ENCODE measurements at regions of chr5 and their contacts with region 1.

Region 1: DNA sequence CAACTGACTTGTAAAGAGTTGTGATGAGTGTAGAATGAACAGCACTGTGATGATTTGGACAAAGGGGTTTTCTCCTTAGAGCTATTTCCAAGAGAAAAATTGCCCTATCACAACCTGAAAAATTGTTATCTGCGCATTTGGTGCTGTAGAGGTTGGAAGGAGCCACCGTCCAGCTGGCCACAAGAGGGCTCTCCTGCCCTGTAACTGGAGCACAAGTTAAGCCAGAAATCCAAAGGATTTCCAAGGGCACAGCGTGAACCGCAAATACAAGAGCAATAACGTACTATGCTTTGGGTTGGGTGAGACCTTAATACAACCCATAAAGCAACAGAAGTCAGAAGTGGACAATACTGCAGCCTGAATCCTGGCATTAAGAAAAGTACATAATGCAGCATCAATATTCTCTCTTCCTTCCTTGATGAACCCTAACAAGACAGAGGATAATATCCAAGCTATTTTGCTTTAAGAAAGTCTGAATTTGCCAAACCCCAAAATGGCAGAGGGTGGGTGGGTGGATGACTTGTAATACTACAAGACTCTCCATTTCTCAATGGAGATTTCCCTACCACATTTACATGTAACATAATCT is 56.8 kb upstream of the SMIM32 start:
- DNase-seq: peak; percentile 30 to 72 (median 46)
- ATAC-seq: peak; percentile 68 to 93 (median 88)
- H3K4me3 ChIP-seq: no peak overlapping the region
- H3K27ac ChIP-seq: no peak overlapping the region
- H3K4me1 ChIP-seq: no peaks in the 10 kb centered on the region
- H3K27me3 ChIP-seq: no peaks in the 10 kb centered on the region
- CTCF ChIP-seq: peak; percentile 26 to 73 (median 55)

Region 2: DNA sequence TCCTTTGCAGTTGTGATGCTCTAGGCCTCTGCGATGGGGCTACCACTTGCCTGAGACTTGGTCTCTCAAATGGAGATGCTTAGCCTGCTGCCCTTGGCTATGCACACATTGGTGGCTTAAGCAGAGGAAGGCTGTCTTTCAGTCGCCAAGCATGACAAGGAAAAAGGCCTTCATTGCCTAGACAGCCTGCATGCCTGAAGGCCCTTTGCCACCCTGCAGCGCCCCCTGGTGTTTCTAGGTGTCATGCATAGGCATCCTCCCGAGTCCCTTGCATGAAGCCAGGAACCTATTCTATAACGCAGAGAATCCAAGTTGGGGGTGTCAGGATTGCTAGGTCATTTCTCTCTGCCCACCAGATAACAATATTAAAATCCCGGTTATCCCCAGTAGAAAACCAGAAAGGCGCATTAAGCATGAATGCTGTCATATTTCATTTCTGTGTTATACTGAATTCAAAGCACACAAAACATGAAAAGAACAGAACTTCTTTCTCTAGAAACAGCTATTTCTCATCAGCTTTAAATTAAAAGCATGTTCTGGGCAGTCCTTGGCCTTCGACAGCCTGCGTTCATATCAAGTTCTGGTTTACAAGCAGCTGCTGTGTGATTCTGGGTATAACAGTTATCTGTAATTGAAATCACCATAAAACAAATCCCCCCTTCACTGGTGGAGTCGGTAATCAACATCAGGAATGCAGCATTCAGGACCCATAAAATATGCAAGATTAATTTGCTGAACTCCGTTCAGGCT is 175.2 kb after region 1 on chr5:
- intact Hi-C with region 1: loop called in 2 of 3 experiments (anchors 10 kb)
- DNase-seq: peak; percentile 54 to 92 (median 78)
- ATAC-seq: peak in 3 of 4 donors; percentile 71 to 88 (median 82)
- H3K4me3 ChIP-seq: no peak overlapping the region
- H3K27ac ChIP-seq: no peak overlapping the region
- H3K4me1 ChIP-seq: no peaks in the 10 kb centered on the region
- H3K27me3 ChIP-seq: no peaks in the 10 kb centered on the region
- CTCF ChIP-seq: peak; percentile 59 to 73 (median 69)

Region 3: DNA sequence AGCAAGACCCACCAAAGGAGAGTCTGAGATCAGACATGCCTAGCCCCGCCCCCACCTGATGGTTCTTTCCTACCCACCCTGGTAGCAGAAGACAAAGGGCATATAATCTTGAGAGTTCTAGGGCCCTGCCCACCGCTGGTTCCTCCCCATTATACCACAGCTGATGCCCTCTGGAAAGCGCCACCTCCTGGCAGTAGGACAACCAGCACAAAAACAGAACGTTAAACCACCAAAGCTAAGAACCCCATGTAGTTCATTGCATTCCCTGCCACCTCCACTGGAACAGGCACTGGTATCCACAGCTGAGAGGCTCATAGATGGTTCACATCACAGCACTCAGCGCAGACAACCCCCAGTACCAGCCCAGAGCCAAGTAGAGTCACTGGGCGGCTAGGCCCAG is 196.8 kb after region 1 on chr5:
- intact Hi-C with region 1: no loop called
- DNase-seq: no peak
- ATAC-seq: no peak
- H3K4me3 ChIP-seq: no peak overlapping the region
- H3K27ac ChIP-seq: no peak overlapping the region
- H3K4me1 ChIP-seq: no peaks in the 10 kb centered on the region
- H3K27me3 ChIP-seq: no peaks in the 10 kb centered on the region
- CTCF ChIP-seq: no peak

Region 4: DNA sequence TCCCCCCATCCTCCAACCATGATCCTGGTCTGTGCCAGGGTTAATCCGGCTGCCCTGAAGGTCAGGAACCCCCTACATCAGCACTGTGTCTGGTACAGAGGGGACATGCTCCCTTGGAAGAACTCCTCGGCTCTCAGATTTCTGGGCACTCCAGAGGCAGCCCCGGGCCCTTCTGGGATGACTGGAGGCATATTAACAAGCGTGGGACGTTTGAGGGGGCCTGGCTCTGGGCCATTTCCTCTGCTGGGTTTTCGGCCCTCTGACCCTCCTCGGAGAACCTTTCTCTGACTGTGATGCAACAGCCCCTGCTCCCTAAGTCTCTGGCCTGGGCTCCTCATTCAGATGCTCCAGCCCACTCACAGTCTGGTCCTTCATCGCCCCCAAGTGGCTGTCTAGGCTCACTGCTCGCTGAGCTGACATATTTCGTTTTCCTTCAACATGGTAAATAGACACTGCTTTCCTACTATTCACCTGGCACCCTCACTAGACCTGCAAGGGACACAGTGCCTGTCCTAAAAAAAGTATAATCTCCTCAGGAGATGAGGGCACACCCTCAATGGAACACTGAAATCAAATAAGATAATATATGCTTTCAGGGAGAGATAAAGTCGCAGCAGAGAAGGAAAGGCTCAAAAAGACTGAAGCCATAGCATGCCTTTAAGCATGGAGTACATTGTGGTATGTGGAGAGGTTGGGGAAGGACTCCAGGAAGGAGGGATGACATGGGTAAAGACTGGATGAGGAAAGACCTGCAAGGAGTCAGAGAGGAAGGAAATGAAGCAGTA is 520.3 kb after region 1 on chr5:
- intact Hi-C with region 1: loop called in 2 of 3 experiments (anchors 5 to 10 kb)
- DNase-seq: peak; percentile 42 to 77 (median 67)
- ATAC-seq: peak; percentile 60 to 96 (median 88)
- H3K4me3 ChIP-seq: no peak overlapping the region
- H3K27ac ChIP-seq: no peak overlapping the region
- H3K4me1 ChIP-seq: no peaks in the 10 kb centered on the region
- H3K27me3 ChIP-seq: no peaks in the 10 kb centered on the region
- CTCF ChIP-seq: peak; percentile 40 to 73 (median 68)